ENCODE measurements at regions of chr22 and their contacts with region 1.

Region 1: GRCh38 chr22:26981541-26981940 is 324.2 kb downstream of the MIAT start:
- DNase-seq: peak; percentile 92
- H3K4me3 ChIP-seq: no peak overlapping the region
- H3K27ac ChIP-seq: peak overlapping the region; percentile 41 to 82 (median 76)
- H3K4me1 ChIP-seq: peaks cover 0 to 38% (median 25%) of the 10 kb centered on the region in 4 donors
- H3K27me3 ChIP-seq: no peaks in the 10 kb centered on the region
- CTCF ChIP-seq: no peak
- EP300 ChIP-seq: peak; percentile 37 to 88 (median 62)
- POLR2A ChIP-seq: no peak

Region 2: DNA sequence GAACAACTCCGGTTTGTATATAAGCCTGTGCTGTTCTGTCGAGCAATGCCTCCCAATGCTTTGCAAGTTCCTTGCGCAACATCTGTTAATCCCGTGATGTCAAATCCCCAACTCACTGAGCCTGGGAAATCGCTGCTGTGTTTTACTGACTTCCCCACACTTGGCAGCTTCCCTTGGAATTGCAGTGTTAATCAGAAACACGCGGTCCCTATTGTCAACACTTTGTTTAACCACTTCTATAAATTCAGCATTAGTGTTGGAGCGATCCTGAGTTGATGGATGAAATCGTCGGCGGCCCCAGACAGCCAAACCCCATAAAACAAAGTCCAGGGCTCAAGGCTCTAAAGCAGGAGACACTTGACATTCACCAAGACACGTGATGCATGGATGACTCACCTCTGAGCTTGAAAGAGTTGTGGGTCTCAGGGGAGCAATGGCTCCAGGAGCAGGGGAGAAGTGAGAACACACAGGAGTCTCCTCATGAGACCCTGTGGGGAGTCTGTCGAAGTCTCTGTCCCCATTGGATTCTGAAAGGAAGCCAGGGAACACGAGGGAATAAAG is 231.2 kb after region 1 on chr22:
- intact Hi-C with region 1: loop called (anchors 2 kb)
- DNase-seq: peak; percentile 97
- H3K4me3 ChIP-seq: no peak overlapping the region
- H3K27ac ChIP-seq: peak overlapping the region; percentile 69 to 80 (median 72)
- H3K4me1 ChIP-seq: peaks cover 0 to 47% (median 38%) of the 10 kb centered on the region in 4 donors
- H3K27me3 ChIP-seq: no peaks in the 10 kb centered on the region
- CTCF ChIP-seq: no peak
- EP300 ChIP-seq: peak; percentile 76 to 92 (median 86)
- POLR2A ChIP-seq: no peak

Region 3: GRCh38 chr22:27238935-27239510 is 257.5 kb after region 1 on chr22:
- intact Hi-C with region 1: no loop called
- DNase-seq: peak; percentile 86
- H3K4me3 ChIP-seq: no peak overlapping the region
- H3K27ac ChIP-seq: peak overlapping the region in 1 of 4 donors; percentile 51
- H3K4me1 ChIP-seq: peaks cover 0 to 31% (median 18%) of the 10 kb centered on the region in 4 donors
- H3K27me3 ChIP-seq: no peaks in the 10 kb centered on the region
- CTCF ChIP-seq: no peak
- EP300 ChIP-seq: no peak
- POLR2A ChIP-seq: no peak

Region 4: DNA sequence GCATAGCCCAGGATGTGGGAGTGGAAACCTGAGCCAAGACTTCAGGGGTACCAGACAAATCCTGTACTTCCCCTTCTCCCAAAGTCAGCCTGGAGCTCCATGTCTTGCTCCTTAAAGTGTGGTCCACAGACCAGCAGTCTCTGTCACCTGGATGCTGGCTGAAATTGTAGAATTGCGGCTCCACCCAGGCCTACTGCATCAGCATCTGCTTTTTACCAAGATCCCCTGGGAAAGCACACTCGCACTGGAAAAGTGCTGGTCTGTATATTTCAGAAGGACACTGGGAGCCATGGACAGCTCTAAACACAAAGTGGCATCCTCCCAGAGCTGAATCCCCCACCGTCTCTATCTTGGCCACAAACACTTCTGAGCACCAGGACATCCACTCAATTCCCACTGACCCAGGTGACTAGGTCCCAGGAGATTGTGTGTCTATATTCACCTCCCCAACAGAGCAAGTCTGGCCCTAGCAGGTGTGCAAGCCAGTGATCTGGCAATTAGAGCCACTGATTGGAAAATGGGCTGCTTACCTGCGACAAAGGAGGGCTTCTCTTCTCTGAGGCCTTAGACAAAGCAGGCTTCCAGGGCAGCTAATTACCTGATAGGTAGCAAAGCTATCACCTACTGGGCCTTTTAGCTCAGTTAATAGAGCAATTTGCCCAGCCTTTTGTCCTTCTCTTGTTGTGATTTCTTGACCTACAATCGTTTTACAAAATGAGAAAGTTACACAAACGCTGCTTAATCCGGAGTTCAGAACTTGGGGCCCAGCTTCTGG is 376.7 kb after region 1 on chr22:
- intact Hi-C with region 1: no loop called
- DNase-seq: no peak
- H3K4me3 ChIP-seq: no peak overlapping the region
- H3K27ac ChIP-seq: no peak overlapping the region
- H3K4me1 ChIP-seq: no peaks in the 10 kb centered on the region
- H3K27me3 ChIP-seq: no peaks in the 10 kb centered on the region
- CTCF ChIP-seq: no peak
- EP300 ChIP-seq: no peak
- POLR2A ChIP-seq: no peak